A549 (cell line): ENCODE measurements at regions of chr4 and their contacts with region 1.

Region 1: GRCh38 chr4:74320559-74321118 is 12.4 kb downstream of the EPGN start:
- DNase-seq: peak; percentile 20 to 78
- ATAC-seq: peak; percentile 87 to 93
- H3K4me3 ChIP-seq: no peak overlapping the region
- H3K27ac ChIP-seq: peak overlapping the region; percentile 67 to 75
- H3K4me1 ChIP-seq: peaks cover 26% of the 10 kb centered on the region
- CTCF ChIP-seq: peak; percentile 77
- EP300 ChIP-seq: no peak
- POLR2A ChIP-seq: no peak
- RAD21 ChIP-seq: peak; percentile 85 to 91

Region 2: DNA sequence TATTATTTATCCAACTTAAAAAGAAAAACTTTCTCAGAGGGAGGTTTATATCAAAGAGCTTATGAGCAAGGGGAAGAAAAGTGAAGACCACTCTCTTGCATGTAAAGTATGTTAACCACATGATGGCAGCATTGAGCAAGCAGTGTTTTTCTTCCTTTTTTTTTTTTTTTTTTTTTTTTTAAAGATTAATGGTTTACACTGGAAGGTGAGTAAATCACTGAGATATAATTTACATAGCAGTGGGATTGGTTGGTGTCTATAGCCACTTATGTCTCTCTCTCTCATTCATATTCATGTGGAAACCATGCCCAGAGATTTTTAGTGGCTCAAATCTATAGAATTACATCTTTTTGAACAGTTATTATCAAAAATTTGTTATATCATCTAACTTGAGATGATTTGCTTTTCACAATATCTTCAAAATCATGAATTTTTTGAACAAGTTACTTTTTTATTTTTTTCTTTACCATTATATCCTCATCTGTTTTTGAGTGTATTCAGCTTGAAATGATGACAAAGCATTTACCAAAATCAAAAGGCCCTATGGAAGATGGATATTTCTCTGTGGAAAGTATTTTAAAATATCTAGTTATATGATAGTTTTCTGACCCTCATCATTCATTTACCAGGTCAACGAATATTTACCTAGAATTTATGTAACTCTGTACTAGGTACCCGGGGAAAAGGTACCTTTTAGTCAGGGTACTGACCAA is 131.2 kb before region 1 on chr4:
- CTCF ChIA-PET with region 1: interaction called, 14 read pairs
- POLR2A ChIA-PET with region 1: interaction called, 4 read pairs
- DNase-seq: peak; percentile 32 to 69
- ATAC-seq: peak in 1 of 2 experiments; percentile 68; a peak in 3 of 6 replicates
- H3K4me3 ChIP-seq: no peak overlapping the region
- H3K27ac ChIP-seq: no peak overlapping the region; a peak in 1 of 6 replicates
- H3K4me1 ChIP-seq: peaks cover 12% of the 10 kb centered on the region
- CTCF ChIP-seq: peak; percentile 72
- EP300 ChIP-seq: no peak
- POLR2A ChIP-seq: no peak
- RAD21 ChIP-seq: peak; percentile 72 to 73

Region 3: GRCh38 chr4:74228691-74229640 is 91.7 kb before region 1 on chr4:
- CTCF ChIA-PET with region 1: interaction called, 16 read pairs
- POLR2A ChIA-PET with region 1: no interaction called
- DNase-seq: peak; percentile 13 to 77
- ATAC-seq: peak; percentile 63 to 87; a peak in 3 of 6 replicates
- H3K4me3 ChIP-seq: no peak overlapping the region
- H3K27ac ChIP-seq: 0 out of 6 replicates have a peak overlapping the region, but pooled peaks of 1 of the 2 experiments have one; percentile 16
- H3K4me1 ChIP-seq: peaks cover 27% of the 10 kb centered on the region
- CTCF ChIP-seq: peak; percentile 61
- EP300 ChIP-seq: no peak
- POLR2A ChIP-seq: no peak
- RAD21 ChIP-seq: peak; percentile 46 to 57; a peak in 3 of 5 replicates

Region 4: DNA sequence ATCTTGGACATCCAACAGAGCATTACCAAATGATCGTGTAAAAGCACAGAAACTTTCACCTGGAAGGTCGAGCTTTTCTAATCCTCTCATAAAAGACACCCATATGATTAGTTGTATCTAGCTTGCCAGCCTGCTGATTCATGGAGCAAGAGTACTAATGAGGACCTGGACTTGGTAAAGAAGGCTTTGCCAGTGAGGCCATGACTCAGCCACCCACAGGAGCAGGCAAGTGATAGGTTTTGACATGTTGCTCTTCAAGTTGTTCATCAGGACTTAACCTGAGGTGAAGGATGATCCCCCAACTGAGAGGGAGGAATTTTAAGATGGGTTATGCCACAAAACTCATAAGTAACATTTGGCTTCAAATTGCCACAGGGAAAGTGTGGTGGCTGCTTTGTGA is 37.0 kb before region 1 on chr4:
- CTCF ChIA-PET with region 1: no interaction called
- POLR2A ChIA-PET with region 1: no interaction called
- DNase-seq: peak; percentile 0 to 38
- ATAC-seq: peak; percentile 54 to 58; a peak in 4 of 6 replicates
- H3K4me3 ChIP-seq: no peak overlapping the region
- H3K27ac ChIP-seq: peak overlapping the region in 1 of 2 experiments; percentile 68; a peak in 3 of 6 replicates
- H3K4me1 ChIP-seq: peaks cover 19% of the 10 kb centered on the region; the same call in 2 of the 3 replicates
- CTCF ChIP-seq: no peak
- EP300 ChIP-seq: no peak
- POLR2A ChIP-seq: no peak
- RAD21 ChIP-seq: no peak

Region 5: GRCh38 chr4:74474345-74475090 is 153.9 kb after region 1 on chr4:
- CTCF ChIA-PET with region 1: no interaction called
- POLR2A ChIA-PET with region 1: no interaction called
- DNase-seq: no peak
- ATAC-seq: no peak
- H3K4me3 ChIP-seq: no peak overlapping the region
- H3K27ac ChIP-seq: peak overlapping the region; percentile 18 to 60; a peak in 1 of 6 replicates
- H3K4me1 ChIP-seq: peaks cover 15% of the 10 kb centered on the region
- CTCF ChIP-seq: no peak
- EP300 ChIP-seq: no peak
- POLR2A ChIP-seq: no peak
- RAD21 ChIP-seq: no peak

Region 6: DNA sequence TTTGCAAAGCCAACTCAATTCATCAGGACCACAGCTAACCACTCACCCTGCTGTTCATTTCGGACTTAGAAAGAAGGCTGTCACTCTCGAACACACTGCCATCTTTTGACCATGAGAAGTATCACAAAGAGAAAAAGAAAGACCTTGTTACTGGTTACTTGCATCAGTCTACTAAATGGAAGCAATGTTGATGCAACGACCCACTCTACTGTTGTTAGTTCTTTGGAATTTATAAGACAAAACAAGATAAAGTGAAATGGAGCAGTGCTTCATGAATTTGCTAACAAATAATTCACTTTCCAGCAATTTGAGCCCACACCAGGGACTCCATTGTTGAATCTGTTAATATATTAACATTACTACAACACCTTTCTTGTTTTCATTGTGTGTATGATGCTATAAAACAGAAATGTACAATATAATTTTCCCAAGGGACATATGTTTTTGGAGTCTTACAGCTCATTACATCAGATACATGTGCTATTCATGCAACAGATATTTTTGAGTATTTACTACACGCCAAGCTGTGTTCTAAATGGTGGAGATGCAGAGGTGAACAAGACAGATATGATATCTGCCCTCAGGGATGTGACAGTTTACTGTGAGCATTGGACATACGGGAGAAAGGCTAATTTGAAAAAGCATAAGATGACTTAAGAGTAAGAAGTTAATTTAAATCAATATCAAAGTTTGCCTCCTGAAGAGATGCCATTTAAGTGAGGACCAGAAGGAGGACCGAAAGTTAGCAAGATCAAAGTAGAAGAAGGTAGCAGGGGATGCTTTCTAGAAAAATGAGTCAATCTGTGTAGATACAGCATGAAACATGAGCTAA is 211.5 kb after region 1 on chr4:
- CTCF ChIA-PET with region 1: interaction called, 33 read pairs
- POLR2A ChIA-PET with region 1: no interaction called
- DNase-seq: peak; percentile 35 to 90
- ATAC-seq: peak; percentile 93 to 97
- H3K4me3 ChIP-seq: no peak overlapping the region
- H3K27ac ChIP-seq: peak overlapping the region; percentile 77 to 85
- H3K4me1 ChIP-seq: peaks cover 48% of the 10 kb centered on the region
- CTCF ChIP-seq: peak; percentile 63
- EP300 ChIP-seq: no peak
- POLR2A ChIP-seq: no peak
- RAD21 ChIP-seq: peak; percentile 77 to 79

Region 7: GRCh38 chr4:74623041-74623440 is 302.4 kb after region 1 on chr4:
- CTCF ChIA-PET with region 1: interaction called, 14 read pairs
- POLR2A ChIA-PET with region 1: no interaction called
- DNase-seq: peak; percentile 33 to 88
- ATAC-seq: peak; percentile 45 to 49; a peak in 3 of 6 replicates
- H3K4me3 ChIP-seq: no peak overlapping the region
- H3K27ac ChIP-seq: peak overlapping the region; percentile 89 to 96
- H3K4me1 ChIP-seq: peaks cover 94% of the 10 kb centered on the region
- CTCF ChIP-seq: peak; percentile 72
- EP300 ChIP-seq: no peak
- POLR2A ChIP-seq: no peak
- RAD21 ChIP-seq: peak; percentile 89 to 90

Region 8: GRCh38 chr4:74675673-74676279 is 355.1 kb after region 1 on chr4:
- CTCF ChIA-PET with region 1: interaction called, 136 read pairs
- POLR2A ChIA-PET with region 1: no interaction called
- DNase-seq: peak; percentile 18 to 80
- ATAC-seq: peak; percentile 78 to 90
- H3K4me3 ChIP-seq: no peak overlapping the region
- H3K27ac ChIP-seq: peak overlapping the region; percentile 32 to 71; a peak in 5 of 6 replicates
- H3K4me1 ChIP-seq: peaks cover 8% of the 10 kb centered on the region; the same call in 2 of the 3 replicates
- CTCF ChIP-seq: peak; percentile 82
- EP300 ChIP-seq: no peak
- POLR2A ChIP-seq: no peak
- RAD21 ChIP-seq: peak; percentile 85 to 94